IMR-90 (cell line): ENCODE measurements at regions of chr6 and their contacts with region 1.

Region 1: DNA sequence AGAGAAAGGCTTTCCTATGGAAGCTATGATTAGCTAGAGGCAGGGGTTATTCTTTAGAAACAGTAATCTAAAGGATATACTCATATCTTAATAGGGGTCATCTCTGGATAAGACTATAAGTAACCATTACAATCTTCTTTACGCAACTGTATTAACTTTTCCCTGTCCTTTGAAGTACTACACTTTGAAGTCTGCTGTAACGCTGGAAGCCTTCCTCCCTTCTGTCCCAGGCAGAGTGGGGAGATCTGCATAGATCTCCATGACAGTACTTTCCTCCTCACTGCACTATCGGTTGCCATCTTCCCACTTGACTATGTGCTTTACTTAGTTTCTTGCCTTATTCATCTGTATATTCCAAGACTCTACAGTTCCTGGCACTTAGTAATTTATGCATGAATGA is 20.1 kb downstream of the SLC35B3 start:
- DNase-seq: peak; percentile 8
- ATAC-seq: peak; percentile 27; the same call in 1 of the 2 replicates
- H3K4me3 ChIP-seq: no peak overlapping the region
- H3K27ac ChIP-seq: no peak overlapping the region
- H3K4me1 ChIP-seq: no peaks in the 10 kb centered on the region
- H3K27me3 ChIP-seq: no peaks in the 10 kb centered on the region
- CTCF ChIP-seq: no peak
- POLR2A ChIP-seq: no peak
- RAD21 ChIP-seq: no peak

Region 2: GRCh38 chr6:8429821-8430220 is 14.5 kb after region 1 on chr6:
- CTCF ChIA-PET with region 1: no interaction called
- POLR2A ChIA-PET with region 1: no interaction called
- dilution Hi-C with region 1: no loop called
- in situ Hi-C with region 1: no loop called
- intact Hi-C with region 1: loop called (anchors 2 kb)
- DNase-seq: no peak
- ATAC-seq: no peak
- H3K4me3 ChIP-seq: no peak overlapping the region
- H3K27ac ChIP-seq: no peak overlapping the region
- H3K4me1 ChIP-seq: peaks cover 8% of the 10 kb centered on the region; the same call in 1 of the 2 replicates
- H3K27me3 ChIP-seq: no peaks in the 10 kb centered on the region
- CTCF ChIP-seq: no peak
- POLR2A ChIP-seq: no peak
- RAD21 ChIP-seq: no peak